ENCODE measurements at regions of chr4 and their contacts with region 1.

Region 1: DNA sequence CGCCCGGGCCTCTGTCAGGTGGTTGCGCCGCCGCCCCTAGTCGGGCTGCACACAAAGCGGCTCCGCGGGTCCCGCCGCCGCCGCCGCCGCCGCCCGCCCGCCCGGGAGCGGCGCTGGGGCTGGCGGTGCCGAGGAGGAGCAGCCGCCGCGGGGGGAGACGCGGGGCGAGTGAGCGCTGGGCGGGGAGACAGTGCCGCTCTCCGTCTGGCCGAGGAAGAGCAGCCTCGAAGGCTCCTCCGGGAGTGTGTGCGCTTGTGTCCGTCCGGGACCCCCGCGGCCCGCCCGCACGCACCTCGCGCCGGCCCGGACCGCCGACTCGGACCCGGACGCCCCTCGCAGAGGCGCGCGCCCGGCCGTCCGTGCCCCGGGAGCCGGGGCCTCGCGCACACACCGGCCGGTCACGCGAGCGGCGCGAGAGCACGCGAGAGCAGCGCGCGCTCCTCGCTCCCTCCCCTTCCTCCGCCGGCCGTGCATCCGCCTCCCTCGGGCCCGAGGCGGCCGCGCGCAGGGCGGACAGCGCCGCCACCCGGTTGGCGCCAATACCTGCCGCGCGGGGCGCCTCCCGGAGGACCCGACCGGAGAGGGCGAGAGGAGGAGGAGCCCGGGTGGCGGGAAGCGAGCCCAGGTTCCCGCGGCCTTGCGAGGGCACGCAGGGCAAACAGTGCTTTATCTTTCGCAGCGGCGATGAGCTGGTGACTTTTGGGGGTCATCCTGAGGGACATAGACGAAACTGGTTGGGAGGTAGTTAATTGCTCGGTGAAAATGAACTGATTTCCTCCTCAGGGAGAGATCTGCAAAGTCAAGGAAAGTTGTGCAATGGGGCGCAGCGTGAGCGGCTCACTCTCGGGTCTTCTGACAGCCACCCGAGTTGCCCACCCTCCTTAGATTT is at the start of gene PDS5A:
- DNase-seq: peak; percentile 90
- ATAC-seq: peak; percentile 91 to 92
- total RNA-seq, gene PDS5A: 35.3 to 40.3 TPM

Region 2: GRCh38 chr4:39469429-39470077 is 508.2 kb before region 1 on chr4:
- intact Hi-C with region 1: loop called in 1 of 2 experiments (anchors 5 kb)
- DNase-seq: peak; percentile 42
- ATAC-seq: peak; percentile 84 to 91

Region 3: DNA sequence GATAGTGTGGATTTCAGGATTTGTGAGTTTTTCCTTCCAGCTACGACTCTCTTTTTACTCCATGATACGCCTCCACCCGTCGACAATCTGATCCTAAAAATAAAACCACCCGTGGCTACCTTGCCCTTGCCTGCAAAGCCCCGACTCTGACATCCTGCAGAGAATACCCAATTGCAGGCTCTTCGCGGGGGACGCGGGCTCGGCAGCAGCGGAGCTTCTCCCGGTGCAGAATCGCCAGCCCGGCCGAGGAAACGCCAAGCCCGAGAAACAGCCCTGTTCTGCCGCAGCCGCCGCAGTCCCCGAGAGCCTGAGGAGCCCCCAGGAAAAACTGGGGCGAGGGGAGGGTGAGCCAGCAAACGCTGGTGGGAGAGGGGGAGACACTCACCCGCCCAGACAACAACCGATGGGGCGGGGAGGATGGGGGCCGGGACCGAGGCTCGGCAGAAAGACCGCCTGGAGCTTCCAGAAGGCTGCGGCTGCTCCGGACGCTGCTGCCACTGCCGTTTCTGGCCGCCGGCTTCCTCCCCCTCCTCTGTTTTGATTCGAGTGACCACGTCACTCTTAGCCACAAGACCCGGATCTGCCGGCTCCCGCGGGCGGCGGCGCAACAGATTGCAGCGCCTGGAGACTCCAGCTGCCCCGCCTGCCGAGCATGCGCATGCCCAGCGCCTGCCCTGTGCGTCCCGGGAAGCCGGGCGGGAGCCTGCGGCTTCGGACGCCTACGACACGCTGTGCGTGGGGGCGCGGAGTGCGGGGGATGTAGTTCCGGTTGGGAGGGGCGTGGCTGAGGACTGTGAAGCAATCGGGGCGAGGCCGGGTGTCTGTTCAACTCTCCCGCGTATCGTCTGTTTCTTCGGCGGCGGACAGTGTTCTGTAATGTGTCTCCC is 339.1 kb before region 1 on chr4 and contains the start of gene SMIM14:
- intact Hi-C with region 1: loop called in 1 of 2 experiments (anchors 5 kb)
- DNase-seq: peak; percentile 99
- ATAC-seq: peak; percentile 98
- total RNA-seq, gene SMIM14: 21.7 to 22.3 TPM

Region 4: GRCh38 chr4:39908284-39908683 is 69.4 kb before region 1 on chr4:
- intact Hi-C with region 1: loop called in 1 of 2 experiments (anchors 10 kb)
- DNase-seq: no peak
- ATAC-seq: no peak